ENCODE measurements at regions of chr15 and their contacts with region 1.

Region 1: DNA sequence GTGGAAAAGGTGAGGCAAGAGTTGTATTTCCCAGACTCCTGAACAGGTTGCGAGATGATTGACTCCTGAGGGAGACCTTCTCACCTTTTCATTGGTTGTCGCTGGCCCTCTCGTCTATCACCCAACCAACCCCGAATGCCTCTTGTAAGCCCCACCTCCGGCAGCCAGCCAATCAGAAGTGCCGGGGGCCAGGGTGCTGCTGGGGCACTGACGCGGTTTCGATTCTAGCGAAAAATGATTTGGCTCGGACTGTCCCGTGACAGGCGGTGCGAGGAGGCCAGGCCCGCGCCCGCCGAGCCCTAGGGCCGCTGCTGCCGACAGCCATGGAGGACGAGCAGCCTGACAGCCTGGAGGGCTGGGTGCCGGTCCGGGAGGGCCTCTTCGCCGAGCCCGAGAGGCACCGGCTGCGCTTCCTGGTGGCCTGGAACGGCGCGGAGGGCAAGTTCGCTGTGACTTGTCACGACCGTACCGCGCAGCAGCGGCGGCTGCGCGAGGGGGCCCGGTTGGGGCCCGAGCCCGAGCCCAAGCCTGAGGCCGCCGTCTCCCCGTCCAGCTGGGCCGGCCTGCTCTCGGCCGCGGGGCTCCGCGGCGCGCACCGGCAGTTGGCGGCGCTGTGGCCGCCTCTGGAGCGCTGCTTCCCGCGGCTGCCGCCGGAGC is at the start of gene WHAMM:
- DNase-seq: peak; percentile 90
- ATAC-seq: peak; percentile 94
- H3K4me3 Mint-ChIP-seq: peak within 1 kb of the TSS; percentile 91
- H3K27ac Mint-ChIP-seq: peak within 1 kb of the TSS; percentile 94
- H3K4me1 Mint-ChIP-seq: peaks cover 22% of the 10 kb centered on the region
- H3K27me3 Mint-ChIP-seq: peaks cover 4% of the 10 kb centered on the region
- total RNA-seq, gene WHAMM: 18.1 to 18.2 TPM

Region 2: DNA sequence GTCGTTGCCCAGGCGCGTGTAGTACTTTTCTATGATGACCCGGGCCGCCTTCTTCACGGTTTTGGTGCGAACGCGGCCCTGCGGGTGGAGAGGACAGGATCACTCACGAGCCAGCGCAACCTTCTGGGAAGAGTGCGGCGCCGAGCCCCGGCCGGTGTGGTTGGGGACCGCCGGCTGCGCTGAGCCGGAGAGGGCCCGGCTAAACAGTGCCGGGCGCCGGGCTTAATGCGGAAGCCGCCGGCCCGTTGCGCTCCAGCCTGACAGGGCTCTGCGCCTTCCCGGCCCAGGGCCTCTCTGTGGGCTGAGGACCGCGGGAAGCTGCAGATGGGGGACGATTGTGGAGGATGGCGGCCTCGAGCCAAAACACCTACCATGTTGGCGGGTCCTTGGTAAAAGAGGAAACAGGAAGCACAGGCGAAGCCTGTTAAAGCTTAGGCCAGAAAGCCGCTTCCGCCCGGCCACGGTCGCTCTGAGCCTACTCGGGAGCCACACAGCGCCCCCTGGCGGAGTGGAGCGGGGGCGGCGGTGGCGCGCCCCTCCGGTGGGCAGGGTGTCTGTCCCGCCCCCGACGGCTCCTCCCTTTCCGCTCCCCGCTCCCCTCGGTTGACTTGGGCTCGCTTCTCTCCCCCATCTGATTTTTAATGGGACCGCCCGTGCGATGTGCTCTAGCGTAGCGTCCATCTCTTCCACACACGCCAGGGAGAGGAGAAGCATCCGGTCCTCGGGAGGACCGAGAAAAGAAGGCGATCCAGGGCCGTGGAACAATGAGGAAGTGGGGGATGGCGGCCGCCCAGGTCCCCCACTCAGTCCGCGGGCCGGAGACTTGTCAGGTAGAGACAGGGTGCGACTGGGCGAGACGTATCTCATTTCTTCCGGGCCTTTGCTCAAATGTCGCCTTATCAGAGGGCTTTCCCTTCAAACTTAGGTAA is 269.2 kb before region 1 on chr15 and contains the start of gene RPS17:
- POLR2A ChIA-PET with region 1: interaction called, 22 read pairs
- DNase-seq: peak; percentile 100
- ATAC-seq: peak; percentile 95
- H3K4me3 Mint-ChIP-seq: peak within 1 kb of the TSS; percentile 96
- H3K27ac Mint-ChIP-seq: peak within 1 kb of the TSS; percentile 97
- H3K4me1 Mint-ChIP-seq: peaks cover 28% of the 10 kb centered on the region
- H3K27me3 Mint-ChIP-seq: no peaks in the 10 kb centered on the region
- total RNA-seq, gene RPS17: 1,491 to 1,514 TPM

Region 3: GRCh38 chr15:82699726-82700125 is 109.8 kb before region 1 on chr15:
- POLR2A ChIA-PET with region 1: no interaction called
- DNase-seq: no peak
- ATAC-seq: no peak
- H3K4me3 Mint-ChIP-seq: no peak overlapping the region
- H3K27ac Mint-ChIP-seq: no peak overlapping the region
- H3K4me1 Mint-ChIP-seq: no peaks in the 10 kb centered on the region
- H3K27me3 Mint-ChIP-seq: no peaks in the 10 kb centered on the region

Region 4: GRCh38 chr15:82749951-82750830 is 59.3 kb before region 1 on chr15:
- POLR2A ChIA-PET with region 1: interaction called, 26 read pairs
- DNase-seq: peak; percentile 79
- ATAC-seq: peak; percentile 92
- H3K4me3 Mint-ChIP-seq: peak overlapping the region; percentile 99
- H3K27ac Mint-ChIP-seq: peak overlapping the region; percentile 95
- H3K4me1 Mint-ChIP-seq: peaks cover 25% of the 10 kb centered on the region
- H3K27me3 Mint-ChIP-seq: no peaks in the 10 kb centered on the region

Region 5: DNA sequence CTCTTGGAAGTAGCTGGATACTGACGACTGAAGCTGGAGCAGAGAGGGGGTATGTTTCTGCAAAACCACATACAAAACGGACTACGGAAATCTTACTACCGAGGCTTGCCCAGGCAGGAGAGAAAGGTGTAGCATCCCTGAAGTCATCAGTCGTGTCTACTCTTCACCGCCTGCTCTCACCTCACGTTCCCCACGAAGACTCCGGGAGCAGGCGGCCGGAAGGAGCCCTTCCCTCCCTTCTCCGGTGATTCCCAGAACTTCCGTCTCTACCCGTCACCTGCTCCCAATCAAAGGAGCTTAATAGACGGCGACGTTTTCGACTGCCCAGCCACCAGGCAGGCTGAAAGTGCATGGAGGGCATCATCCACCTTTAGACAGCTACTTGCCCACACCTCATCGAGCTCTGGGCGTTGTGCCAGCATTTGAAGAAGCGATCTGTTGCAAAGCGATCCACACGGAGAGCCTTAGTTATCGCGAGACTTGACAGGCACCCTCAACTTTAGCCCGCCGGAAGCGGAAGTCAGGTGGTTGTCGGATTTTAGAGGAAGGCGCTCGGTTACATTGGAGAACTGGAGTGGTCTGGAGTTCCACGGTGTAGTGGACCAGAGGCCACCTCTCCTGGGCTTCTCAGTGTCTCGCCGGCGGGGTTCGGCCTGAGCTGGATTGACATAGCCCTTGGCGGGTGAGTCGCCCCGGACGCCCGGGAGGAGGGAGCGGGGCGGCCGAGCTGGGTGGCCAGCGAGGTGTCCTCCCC is 176.3 kb after region 1 on chr15 and contains the start of gene RAMAC:
- POLR2A ChIA-PET with region 1: interaction called, 17 read pairs
- DNase-seq: peak; percentile 83
- ATAC-seq: peak; percentile 92
- H3K4me3 Mint-ChIP-seq: peak within 1 kb of the TSS; percentile 90
- H3K27ac Mint-ChIP-seq: peak within 1 kb of the TSS; percentile 98
- H3K4me1 Mint-ChIP-seq: peaks cover 27% of the 10 kb centered on the region
- H3K27me3 Mint-ChIP-seq: no peaks in the 10 kb centered on the region
- total RNA-seq, gene RAMAC: 24.4 to 25.9 TPM

Region 6: GRCh38 chr15:83018436-83018835 is 208.9 kb after region 1 on chr15:
- POLR2A ChIA-PET with region 1: no interaction called
- DNase-seq: no peak
- ATAC-seq: no peak
- H3K4me3 Mint-ChIP-seq: no peak overlapping the region
- H3K27ac Mint-ChIP-seq: no peak overlapping the region
- H3K4me1 Mint-ChIP-seq: peaks cover 11% of the 10 kb centered on the region
- H3K27me3 Mint-ChIP-seq: no peaks in the 10 kb centered on the region

Measured in activated naive CD8-positive, alpha-beta T cell treated with anti-CD3 and anti-CD28 coated beads, Interleukin-2, amount 10 ng/mL, durations not matched to agents 7 days and 5 days (primary cell).